ENCODE measurements at regions of chr4 and their contacts with region 1.

Region 1: GRCh38 chr4:89803915-89804314 is 33.0 kb downstream of the SNCA start:
- DNase-seq: no peak
- H3K4me3 ChIP-seq: no peak overlapping the region
- H3K27ac ChIP-seq: no peak overlapping the region
- H3K4me1 ChIP-seq: no peaks in the 10 kb centered on the region
- H3K27me3 ChIP-seq: no peaks in the 10 kb centered on the region
- CTCF ChIP-seq: no peak
- POLR2A ChIP-seq: no peak

Region 2: DNA sequence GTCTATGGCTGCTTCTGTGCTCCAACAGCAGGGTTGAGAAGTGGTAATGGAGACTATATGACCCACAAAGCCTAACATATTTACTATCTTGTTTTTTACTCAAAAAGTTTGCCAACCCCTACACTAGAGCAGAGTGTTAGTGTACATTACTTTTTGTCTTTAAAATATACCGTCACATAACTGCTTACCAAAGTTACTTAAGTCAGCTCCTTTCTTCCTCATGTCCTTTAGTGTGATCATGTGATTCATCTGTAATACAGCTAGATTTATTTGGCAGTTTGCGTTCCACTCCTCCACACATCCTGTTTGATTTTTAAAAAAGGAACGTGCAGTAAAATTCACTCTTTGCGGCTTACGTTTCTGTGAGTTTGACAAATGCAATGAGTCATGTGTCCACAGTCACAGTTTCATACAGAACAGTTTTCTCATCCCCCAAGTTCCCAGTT is 334.0 kb before region 1 on chr4:
- intact Hi-C with region 1: no loop called
- DNase-seq: no peak
- H3K4me3 ChIP-seq: peak overlapping the region in 1 of 3 donors; percentile 35
- H3K27ac ChIP-seq: no peak overlapping the region
- H3K4me1 ChIP-seq: no peaks in the 10 kb centered on the region
- H3K27me3 ChIP-seq: no peaks in the 10 kb centered on the region
- CTCF ChIP-seq: no peak
- POLR2A ChIP-seq: no peak

Region 3: DNA sequence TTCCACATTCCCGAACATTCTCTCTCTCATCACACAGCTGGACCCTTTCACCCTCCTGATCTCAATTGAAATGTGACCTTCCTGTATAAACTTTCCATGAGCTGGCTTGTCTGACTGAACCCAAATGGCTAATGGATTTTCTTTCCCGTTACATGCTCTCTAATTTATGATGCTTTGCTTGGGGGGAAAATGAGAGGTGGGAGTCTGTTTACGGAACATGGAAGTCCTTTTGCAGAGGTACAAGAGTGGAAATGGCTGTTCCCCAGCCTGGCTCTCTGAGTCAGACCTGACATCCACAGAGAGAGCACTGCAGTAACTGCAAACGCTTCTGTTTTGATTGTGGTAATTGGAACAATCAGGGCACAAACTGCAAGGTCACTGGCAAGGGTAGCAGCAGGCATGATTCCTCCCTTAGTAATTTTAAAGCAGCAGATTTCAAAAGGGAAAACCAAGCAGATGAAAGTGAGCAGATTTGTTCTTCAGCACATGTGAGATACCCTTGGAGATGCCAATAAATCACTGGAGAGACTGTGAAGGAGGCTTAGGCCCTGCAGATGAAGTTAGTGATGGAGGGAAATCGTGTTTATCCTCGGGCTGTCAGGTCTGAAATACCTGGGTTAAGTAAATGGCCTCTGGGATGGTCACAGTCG is 50.9 kb before region 1 on chr4:
- intact Hi-C with region 1: loop called (anchors 2 kb)
- DNase-seq: no peak
- H3K4me3 ChIP-seq: no peak overlapping the region
- H3K27ac ChIP-seq: peak overlapping the region; percentile 53 to 73
- H3K4me1 ChIP-seq: no peaks in the 10 kb centered on the region
- H3K27me3 ChIP-seq: no peaks in the 10 kb centered on the region
- CTCF ChIP-seq: no peak
- POLR2A ChIP-seq: no peak

Region 4: GRCh38 chr4:89868999-89869589 is 65.2 kb after region 1 on chr4:
- intact Hi-C with region 1: no loop called
- DNase-seq: no peak
- H3K4me3 ChIP-seq: no peak overlapping the region
- H3K27ac ChIP-seq: no peak overlapping the region
- H3K4me1 ChIP-seq: no peaks in the 10 kb centered on the region
- H3K27me3 ChIP-seq: no peaks in the 10 kb centered on the region
- CTCF ChIP-seq: peak in 1 of 3 donors; percentile 14
- POLR2A ChIP-seq: no peak